Activated T-helper 1 cell treated with anti-CD3 and anti-CD28 coated beads, Interleukin-12 subunit alpha, Interleukin-12 subunit beta, Interleukin-2, Interleukin-4 antibody, amounts not matched to agents 30 ng/mL and 10 ng/mL and 1 ng/mL, durations not matched to agents 14 hours and 24 hours and 36 hours (primary cell): ENCODE measurements at regions of chr6 and their contacts with region 1.

Region 1: GRCh38 chr6:42563697-42564505 is at the start of gene UBR2:
- DNase-seq: peak; percentile 91
- H3K4me3 Mint-ChIP-seq: peak within 1 kb of the TSS; percentile 100
- H3K27ac Mint-ChIP-seq: peak within 1 kb of the TSS; percentile 97
- H3K4me1 Mint-ChIP-seq: peaks cover 31% of the 10 kb centered on the region
- H3K27me3 Mint-ChIP-seq: peaks cover 2% of the 10 kb centered on the region
- total RNA-seq, gene UBR2: 26.8 and 28.1 TPM in 2 replicates

Region 2: DNA sequence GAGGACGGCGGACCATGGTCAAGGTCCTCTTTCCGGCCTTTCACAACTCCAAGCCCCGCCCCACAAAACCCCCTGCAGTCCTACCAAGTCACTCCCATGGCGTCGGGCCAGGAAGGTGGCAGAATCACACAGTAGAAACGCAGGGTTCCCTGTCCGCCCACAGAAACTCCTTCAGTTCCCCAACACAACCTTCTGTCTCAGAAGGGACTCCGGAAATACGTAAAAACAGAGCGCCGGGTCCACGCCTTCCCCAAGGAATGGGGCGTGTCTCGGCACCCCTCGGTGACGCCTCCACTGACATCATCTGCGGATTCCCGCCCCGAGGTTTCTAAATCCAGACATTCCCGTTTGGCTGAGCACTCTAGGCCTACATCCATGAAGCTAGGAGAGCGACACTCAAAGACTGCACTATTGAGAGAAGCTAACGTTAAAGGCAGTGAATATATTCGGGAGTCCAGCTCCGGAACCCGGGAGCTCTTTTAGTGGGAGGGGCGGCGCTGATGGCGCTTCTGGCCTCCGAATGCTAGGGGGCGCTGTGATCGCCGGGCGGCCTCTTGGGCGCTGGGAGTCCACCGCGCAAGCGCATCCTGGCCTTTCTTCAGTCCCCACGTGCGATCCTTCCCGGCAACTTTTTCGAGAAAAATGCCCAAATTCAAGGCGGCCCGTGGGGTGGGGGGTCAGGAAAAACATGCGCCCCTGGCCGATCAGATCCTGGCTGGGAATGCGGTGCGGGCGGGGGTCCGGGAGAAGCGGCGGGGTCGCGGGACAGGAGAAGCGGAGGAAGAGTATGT is 642.8 kb before region 1 on chr6 and contains the starts of genes BYSL and MED20:
- intact Hi-C with region 1: loop called (anchors 10 kb)
- DNase-seq: peak; percentile 89
- H3K4me3 Mint-ChIP-seq: peak within 1 kb of the TSS; percentile 98
- H3K27ac Mint-ChIP-seq: peak within 1 kb of the TSS; percentile 98
- H3K4me1 Mint-ChIP-seq: peaks cover 53% of the 10 kb centered on the region
- H3K27me3 Mint-ChIP-seq: no peaks in the 10 kb centered on the region
- total RNA-seq, gene BYSL: 82.9 and 88.5 TPM in 2 replicates
- total RNA-seq, gene MED20: 19.0 and 23.8 TPM in 2 replicates

Region 3: DNA sequence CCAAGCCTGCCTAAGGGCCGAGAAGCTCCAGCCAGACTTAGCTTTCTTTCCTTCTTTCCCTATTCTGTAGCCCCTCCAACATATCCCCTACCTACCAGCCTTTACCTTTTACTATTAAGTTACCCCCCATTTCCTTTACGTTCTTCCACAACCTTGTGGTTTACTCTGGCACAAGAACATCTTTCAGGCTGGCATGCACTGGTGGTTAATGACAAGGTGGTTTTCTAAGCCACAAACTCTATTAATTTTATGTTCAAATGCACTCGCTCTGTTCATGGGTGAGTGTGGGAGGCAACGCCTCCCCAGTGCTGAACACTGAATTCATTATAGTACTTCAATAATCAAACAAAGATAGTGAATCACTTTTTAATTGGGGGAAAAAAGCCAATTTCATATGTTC is 176.6 kb before region 1 on chr6:
- intact Hi-C with region 1: no loop called
- DNase-seq: no peak
- H3K4me3 Mint-ChIP-seq: peak overlapping the region; percentile 45
- H3K27ac Mint-ChIP-seq: peak overlapping the region; percentile 80
- H3K4me1 Mint-ChIP-seq: peaks cover 83% of the 10 kb centered on the region
- H3K27me3 Mint-ChIP-seq: no peaks in the 10 kb centered on the region

Region 4: DNA sequence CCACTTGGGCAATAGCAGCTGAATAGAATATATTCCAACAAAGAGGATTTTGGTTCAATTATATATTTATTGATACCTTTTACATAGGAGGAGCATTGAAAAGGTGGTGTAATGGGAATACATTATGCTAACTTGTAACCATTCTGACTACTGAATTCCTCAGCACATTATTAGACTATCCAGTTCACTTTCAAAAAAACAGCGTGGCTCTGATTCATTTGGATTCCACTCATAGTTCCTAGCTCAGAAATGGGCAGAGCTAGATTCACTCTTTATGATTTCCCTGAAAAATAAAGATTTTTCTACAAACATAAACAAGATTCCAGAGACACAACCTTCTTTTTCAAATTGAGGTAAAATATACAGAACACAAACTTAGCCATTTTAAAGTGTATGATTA is 103.0 kb before region 1 on chr6:
- intact Hi-C with region 1: no loop called
- DNase-seq: no peak
- H3K4me3 Mint-ChIP-seq: no peak overlapping the region
- H3K27ac Mint-ChIP-seq: no peak overlapping the region
- H3K4me1 Mint-ChIP-seq: peaks cover 5% of the 10 kb centered on the region
- H3K27me3 Mint-ChIP-seq: peaks cover 14% of the 10 kb centered on the region

Region 5: DNA sequence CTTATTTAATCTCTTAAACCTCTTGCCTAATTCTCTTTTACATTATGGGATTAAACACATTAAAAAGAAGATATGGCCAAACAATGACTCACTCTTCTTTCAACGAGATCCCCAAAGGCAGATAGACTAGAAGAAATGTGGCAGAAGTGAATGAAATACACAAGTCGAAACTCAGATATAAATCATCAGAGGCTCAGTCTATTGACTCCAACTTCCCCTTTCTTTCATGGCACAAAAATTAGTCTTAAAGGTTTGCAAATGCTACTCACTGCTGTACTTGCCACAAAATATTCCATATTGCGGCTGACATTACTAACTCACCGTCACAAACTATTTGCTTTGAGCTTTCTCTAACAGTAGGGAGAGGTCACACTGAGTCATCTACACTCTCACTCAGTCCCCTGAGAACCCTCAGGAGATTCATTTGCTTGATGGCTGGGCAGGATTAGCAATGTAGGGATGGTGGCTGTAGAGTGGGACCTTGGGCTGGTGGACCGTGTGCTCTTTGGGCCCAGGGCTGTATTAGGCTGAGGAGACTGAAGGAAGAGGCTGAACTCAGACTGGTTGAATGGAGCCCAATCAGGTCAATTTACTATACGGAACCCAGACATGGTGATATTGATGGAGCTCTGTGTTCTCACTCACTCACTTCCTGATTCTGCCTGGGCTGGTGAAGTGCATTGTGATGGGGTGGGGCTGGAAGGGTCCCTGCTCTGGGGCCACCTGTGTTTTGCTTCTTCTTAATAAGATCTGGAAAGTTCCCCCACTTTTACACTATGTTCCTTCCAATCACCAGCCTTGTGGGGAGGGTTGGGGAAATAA is 42.9 kb before region 1 on chr6:
- intact Hi-C with region 1: loop called (anchors 2 kb)
- DNase-seq: no peak
- H3K4me3 Mint-ChIP-seq: peak overlapping the region; percentile 9
- H3K27ac Mint-ChIP-seq: peak overlapping the region; percentile 89
- H3K4me1 Mint-ChIP-seq: peaks cover 16% of the 10 kb centered on the region
- H3K27me3 Mint-ChIP-seq: peaks cover 4% of the 10 kb centered on the region

Region 6: DNA sequence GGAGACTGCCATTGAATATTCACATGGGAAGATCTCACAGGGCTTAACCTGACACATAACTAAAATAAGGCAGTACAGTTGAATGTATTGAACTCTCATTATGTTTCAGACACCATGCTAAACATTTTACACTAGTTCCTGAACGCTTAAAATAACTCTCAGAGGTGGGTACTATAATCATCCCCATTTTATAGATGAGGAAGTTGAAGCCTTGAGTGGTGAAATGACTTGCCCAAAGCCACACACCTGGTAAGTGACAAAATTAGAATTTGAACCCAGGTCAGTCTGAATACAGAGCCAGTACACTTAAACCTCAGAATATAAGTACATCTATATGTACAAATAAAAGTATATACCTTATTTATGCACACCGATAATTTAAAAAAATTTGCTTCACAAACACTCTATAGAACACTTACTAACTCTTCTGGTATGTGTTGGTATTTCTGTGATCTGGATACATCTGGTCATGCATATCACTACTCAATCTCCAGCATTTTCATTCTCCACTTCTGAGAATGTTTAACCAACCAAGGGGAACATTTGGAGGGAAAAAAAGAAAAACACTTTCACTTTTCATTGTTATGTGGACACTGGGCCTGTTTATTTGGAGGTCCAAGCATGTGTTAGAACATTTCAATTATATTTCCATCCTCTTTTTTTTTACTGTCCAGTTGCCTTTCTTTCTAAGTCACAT is 213.4 kb after region 1 on chr6:
- intact Hi-C with region 1: loop called (anchors 10 kb)
- DNase-seq: no peak
- H3K4me3 Mint-ChIP-seq: no peak overlapping the region
- H3K27ac Mint-ChIP-seq: peak overlapping the region; percentile 57
- H3K4me1 Mint-ChIP-seq: peaks cover 68% of the 10 kb centered on the region
- H3K27me3 Mint-ChIP-seq: no peaks in the 10 kb centered on the region

Region 7: DNA sequence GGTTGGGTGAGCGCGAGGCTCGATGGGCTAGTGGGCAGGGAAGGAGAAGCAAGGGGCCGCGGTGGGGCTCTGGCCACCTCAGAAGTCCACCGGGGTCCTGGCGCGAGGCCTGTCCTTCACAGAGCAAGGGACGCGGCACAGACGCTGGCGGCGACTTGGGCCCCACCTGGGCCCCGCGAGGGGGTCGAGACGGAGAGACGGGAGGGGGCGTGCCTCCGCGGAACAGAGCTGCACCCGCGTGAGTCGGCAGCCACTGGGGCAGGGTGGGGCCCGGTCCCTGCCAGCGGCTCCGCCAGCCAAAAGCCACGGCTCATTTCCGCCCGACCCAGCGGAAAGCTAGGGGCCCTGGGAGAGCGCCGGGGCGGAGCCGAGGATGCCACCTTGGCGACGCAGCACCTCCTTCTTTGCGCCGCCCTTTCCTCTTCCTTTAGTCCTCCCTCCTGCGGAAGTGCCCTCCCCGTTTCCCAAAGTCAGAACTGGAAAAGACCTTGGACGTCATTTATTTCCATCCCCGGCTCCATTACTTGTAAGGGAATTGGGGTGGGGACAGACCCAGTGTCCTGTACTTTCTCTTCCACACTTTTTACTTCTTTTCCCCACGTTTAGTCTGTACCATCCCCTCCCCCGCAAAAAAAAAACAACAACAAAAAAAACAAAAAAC is 489.8 kb after region 1 on chr6 and contains the start of gene CUL7:
- intact Hi-C with region 1: loop called (anchors 2 kb)
- DNase-seq: peak; percentile 89
- H3K4me3 Mint-ChIP-seq: peak within 1 kb of the TSS; percentile 99
- H3K27ac Mint-ChIP-seq: peak within 1 kb of the TSS; percentile 98
- H3K4me1 Mint-ChIP-seq: peaks cover 53% of the 10 kb centered on the region
- H3K27me3 Mint-ChIP-seq: no peaks in the 10 kb centered on the region
- total RNA-seq, gene CUL7: 20.1 and 23.2 TPM in 2 replicates

Region 8: DNA sequence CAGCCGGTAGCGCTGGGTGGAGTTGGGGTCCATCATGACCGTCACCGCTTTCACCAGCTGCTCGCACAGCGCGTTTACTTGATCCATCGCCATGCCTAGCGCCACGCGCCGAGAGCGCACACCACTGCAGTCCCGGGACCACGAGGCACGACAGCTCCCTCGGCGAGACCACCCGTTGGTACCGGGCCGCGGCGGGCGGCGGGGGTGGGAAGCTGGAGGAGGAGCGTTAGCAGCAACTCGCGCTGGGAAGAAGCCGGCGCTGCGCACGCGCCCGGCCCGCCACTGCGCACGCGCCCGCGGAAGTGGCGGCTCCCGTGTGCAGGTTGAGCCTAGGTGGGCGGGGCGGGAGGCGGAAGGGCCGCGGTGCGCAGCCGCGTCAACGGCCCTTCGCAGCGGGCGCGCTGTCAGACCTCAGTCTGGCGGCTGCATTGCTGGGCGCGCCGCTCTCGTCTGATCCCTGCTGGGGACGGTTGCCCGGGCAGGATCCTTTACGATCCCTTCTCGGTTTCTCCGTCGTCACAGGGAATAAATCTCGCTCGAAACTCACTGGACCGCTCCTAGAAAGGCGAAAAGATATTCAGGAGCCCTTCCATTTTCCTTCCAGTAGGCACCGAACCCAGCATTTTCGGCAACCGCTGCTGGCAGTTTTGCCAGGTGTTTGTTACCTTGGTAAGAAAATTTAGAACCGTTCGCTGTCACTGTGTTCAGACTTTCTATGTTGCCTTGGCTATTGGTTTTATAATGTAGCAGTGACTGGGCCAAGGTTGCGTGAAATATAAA is 1012.1 kb after region 1 on chr6 and contains the starts of genes POLH and XPO5:
- intact Hi-C with region 1: loop called (anchors 10 kb)
- DNase-seq: peak; percentile 90
- H3K4me3 Mint-ChIP-seq: peak within 1 kb of the TSS; percentile 91
- H3K27ac Mint-ChIP-seq: peak within 1 kb of the TSS; percentile 86
- H3K4me1 Mint-ChIP-seq: peaks cover 43% of the 10 kb centered on the region
- H3K27me3 Mint-ChIP-seq: no peaks in the 10 kb centered on the region
- total RNA-seq, gene POLH: 35.7 and 39.1 TPM in 2 replicates
- total RNA-seq, gene XPO5: 135 and 149 TPM in 2 replicates